PC-3 (cell line): ENCODE measurements at regions of chr14 and their contacts with region 1.

Region 1: GRCh38 chr14:99563233-99564129 is 40.5 kb downstream of the CCDC85C start:
- DNase-seq: peak; percentile 87
- ATAC-seq: peak; percentile 80
- H3K4me3 ChIP-seq: no peak overlapping the region
- H3K27ac ChIP-seq: no peak overlapping the region
- H3K4me1 ChIP-seq: peaks cover 57% of the 10 kb centered on the region
- H3K27me3 ChIP-seq: no peaks in the 10 kb centered on the region
- CTCF ChIP-seq: peak; percentile 77

Region 2: DNA sequence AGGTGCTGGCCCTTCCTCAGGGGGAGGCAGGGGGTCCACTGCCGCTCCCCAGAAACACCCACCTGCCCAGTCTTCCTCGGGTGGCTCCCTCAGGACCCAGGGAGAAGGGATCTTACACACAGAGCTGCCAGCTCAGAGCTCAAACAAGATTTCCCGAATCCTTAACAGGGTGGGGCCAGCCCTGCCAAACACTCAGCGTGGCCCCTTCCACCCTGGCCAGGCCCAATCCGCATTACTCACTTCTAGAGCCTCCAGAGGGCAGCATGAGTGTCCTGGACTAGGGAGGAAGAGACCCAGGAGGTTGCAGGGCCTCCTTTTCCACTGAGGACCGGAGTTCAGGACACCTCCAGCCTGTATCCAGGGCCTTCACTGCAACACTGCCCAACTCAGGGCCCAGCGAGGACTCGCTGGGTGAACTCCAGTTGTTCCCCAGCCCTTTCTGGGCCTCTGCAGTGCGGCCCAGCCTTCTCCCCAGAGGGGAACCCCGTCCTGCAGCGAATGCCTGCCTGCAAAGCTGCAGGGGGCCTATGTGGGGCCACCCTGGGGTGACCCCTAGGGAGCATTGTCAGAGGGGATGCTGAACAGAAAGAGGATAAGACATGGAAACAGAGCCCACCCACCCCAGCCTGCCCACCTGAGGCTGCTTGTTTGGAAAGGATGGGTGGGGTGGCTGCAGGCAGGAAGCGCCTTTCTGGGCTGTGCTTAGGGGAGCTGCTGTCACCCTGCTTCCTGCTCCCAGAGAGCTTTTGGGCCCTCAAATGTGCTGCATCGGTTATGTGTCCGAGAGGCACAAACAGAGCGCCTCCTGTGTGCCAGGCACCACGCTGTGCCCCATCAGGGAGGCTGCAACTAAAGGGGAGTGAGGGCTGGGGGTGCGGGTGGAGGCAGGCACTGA is 38.4 kb before region 1 on chr14:
- CTCF ChIA-PET with region 1: no interaction called
- POLR2A ChIA-PET with region 1: no interaction called
- intact Hi-C with region 1: loop called (anchors 5 kb)
- DNase-seq: peak; percentile 81
- ATAC-seq: peak; percentile 82
- H3K4me3 ChIP-seq: peak overlapping the region; percentile 25; the same call in 1 of the 2 replicates
- H3K27ac ChIP-seq: peak overlapping the region; percentile 54
- H3K4me1 ChIP-seq: peaks cover 41% of the 10 kb centered on the region
- H3K27me3 ChIP-seq: no peaks in the 10 kb centered on the region
- CTCF ChIP-seq: peak; percentile 58

Region 3: DNA sequence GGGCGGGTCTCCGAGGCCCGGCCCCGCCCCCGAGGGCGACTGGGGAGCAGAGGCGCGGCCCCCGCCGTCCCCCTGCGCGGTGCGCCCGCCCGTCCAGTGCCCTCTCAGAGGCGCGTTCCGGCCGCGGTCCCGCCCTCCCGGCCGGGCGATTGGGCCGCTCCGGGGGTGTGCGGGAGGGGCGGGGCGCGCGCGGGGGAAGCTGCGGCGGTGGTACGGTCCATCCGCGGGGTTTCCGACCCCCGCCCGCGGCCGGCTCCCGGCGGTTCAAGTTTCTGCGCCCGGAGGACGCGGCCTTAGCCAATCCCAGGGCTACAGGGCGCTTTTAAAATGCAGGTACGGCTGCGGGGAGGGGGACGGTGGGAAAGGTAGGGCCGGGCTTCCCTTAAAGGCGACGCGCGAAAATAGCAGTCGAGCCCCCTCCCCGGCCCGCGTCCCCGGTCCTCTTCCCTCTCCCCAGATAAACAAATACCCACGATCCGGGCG is 40.8 kb after region 1 on chr14:
- CTCF ChIA-PET with region 1: interaction called, 4 read pairs
- POLR2A ChIA-PET with region 1: no interaction called
- intact Hi-C with region 1: loop called (anchors 2 kb)
- DNase-seq: peak; percentile 98
- ATAC-seq: peak; percentile 81
- H3K4me3 ChIP-seq: peak overlapping the region; percentile 92
- H3K27ac ChIP-seq: peak overlapping the region; percentile 25; the same call in 1 of the 2 replicates
- H3K4me1 ChIP-seq: peaks cover 19% of the 10 kb centered on the region
- H3K27me3 ChIP-seq: no peaks in the 10 kb centered on the region
- CTCF ChIP-seq: no peak

Region 4: DNA sequence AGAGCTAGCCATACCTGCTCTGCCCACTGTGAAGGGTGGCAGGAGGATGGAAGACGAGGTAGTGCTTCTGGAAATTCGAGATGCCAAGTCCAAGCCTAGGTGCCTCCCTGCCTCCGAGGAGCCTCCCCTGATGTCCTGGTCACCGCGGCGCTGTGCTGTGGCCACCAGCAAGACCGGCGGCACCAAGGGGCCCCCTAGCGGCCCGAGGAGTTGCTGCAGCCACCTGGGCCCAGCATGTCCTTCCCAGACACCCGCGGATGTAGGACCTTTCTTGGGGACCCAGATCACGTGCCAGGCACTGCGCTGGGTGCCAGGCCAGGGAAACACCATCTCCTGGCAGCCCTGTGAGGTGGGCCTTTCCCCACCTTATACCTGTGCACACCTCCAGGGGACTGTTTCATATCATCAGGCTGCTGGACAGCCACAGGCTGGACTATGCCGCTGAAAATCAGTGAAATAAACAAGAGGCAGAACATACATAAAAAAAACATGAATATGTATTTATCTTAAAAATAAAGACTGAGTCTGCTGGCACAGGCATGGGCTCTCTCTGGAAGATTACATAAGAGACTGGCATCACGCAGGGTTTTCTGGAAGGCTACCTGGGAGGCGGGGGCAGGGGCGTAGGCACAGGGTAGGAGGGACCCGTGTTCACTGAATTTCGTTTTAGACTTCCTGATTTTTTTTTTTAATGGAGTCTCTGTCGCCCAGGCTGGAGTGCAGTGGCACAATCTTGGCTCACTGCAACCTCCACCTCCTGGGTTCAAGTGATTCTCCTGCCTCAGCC is 65.5 kb after region 1 on chr14:
- CTCF ChIA-PET with region 1: no interaction called
- POLR2A ChIA-PET with region 1: no interaction called
- intact Hi-C with region 1: loop called (anchors 1 kb)
- DNase-seq: peak; percentile 82
- ATAC-seq: peak; percentile 98
- H3K4me3 ChIP-seq: peak overlapping the region; percentile 9; the same call in 1 of the 2 replicates
- H3K27ac ChIP-seq: no peak overlapping the region
- H3K4me1 ChIP-seq: 0 out of 2 replicates have a peak, but pooled peaks cover 3% of the 10 kb centered on the region
- H3K27me3 ChIP-seq: no peaks in the 10 kb centered on the region
- CTCF ChIP-seq: peak; percentile 97